Breast epithelium (tissue), 4 donors: ENCODE measurements at regions of chr5 and their contacts with region 1.

Region 1: DNA sequence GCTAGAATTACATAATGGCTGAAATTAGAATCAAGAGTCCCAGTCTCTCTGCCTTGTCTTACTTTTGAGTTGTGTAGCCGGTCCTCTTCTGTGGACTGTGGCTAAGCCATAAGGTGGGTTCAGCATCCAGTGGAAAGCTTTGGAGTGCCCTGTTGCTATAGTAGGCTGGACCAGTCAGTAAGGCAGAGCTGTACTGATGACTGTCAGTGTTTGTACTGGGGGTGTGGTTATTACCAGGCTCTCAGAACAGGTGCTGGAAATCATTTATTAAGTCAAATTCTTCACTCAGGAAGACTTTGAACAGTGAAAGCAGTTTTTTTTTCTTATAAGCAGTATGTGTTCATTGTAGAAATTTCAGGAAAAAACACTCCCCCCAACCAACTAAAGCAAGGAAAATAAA is 129.4 kb downstream of the ZSWIM6 start:
- DNase-seq: no peak
- H3K4me3 ChIP-seq: no peak overlapping the region
- H3K27ac ChIP-seq: no peak overlapping the region
- H3K4me1 ChIP-seq: no peaks in the 10 kb centered on the region
- H3K27me3 ChIP-seq: no peaks in the 10 kb centered on the region
- CTCF ChIP-seq: no peak
- POLR2A ChIP-seq: no peak

Region 2: DNA sequence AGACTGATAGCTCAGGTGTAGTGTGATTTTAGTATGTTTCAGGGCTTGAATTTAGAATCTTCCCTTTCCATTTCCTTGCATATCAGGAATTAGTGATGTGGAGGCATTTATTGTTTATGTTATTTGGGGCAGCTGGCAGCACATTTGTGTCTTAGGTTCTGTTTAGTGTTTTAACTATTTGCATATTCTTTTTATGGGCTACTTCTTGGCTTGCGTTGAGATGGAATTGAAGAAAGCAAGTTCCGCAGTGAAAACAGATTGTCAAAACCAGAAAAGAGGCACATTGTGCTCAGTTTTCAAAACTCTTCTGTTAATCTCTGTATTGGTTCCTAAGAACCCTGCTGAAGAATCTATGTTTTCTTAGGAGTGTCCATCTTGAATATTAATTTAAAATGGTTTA is 49.1 kb before region 1 on chr5:
- intact Hi-C with region 1: loop called (anchors 2 kb)
- DNase-seq: no peak
- H3K4me3 ChIP-seq: no peak overlapping the region
- H3K27ac ChIP-seq: no peak overlapping the region
- H3K4me1 ChIP-seq: no peaks in the 10 kb centered on the region
- H3K27me3 ChIP-seq: no peaks in the 10 kb centered on the region
- CTCF ChIP-seq: no peak
- POLR2A ChIP-seq: no peak

Region 3: DNA sequence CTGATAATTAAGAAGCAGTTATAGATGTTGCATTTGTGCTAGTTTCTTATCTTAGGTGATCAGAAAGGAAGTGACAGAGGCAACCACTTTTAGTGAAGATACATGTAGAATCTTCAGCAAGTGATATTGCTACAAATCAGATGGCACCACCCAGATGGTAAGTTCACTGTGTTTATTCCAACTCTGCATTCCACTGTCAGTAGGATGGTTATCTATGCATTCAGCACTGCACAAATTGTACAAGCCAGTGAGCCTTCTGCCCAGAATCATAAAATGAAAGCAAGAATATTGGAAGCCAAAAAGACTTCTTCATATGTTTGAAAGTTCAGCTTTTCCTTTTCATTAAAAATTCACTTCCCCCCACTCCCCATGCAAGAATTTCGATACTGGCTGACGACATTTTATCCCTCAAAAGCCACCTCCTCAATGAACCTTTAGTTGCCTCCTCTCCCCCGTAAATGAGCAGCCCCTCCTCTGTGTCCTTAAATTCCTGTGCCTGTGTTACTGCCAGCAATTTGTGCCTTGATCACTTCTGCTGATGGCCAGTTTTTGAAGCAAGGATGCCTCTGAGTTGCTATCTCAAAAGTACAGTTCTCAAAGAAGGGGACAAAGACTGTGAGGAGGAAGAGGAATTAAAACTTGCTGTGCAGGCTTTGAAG is 37.8 kb before region 1 on chr5:
- intact Hi-C with region 1: no loop called
- DNase-seq: no peak
- H3K4me3 ChIP-seq: peak overlapping the region in 2 of 3 donors; percentile 11 to 40
- H3K27ac ChIP-seq: peak overlapping the region in 1 of 2 donors; percentile 12
- H3K4me1 ChIP-seq: no peaks in the 10 kb centered on the region
- H3K27me3 ChIP-seq: no peaks in the 10 kb centered on the region
- CTCF ChIP-seq: no peak
- POLR2A ChIP-seq: no peak

Region 4: GRCh38 chr5:62043289-62044280 is 582.2 kb after region 1 on chr5:
- intact Hi-C with region 1: loop called (anchors 5 kb)
- DNase-seq: no peak
- H3K4me3 ChIP-seq: no peak overlapping the region
- H3K27ac ChIP-seq: no peak overlapping the region
- H3K4me1 ChIP-seq: no peaks in the 10 kb centered on the region
- H3K27me3 ChIP-seq: no peaks in the 10 kb centered on the region
- CTCF ChIP-seq: no peak
- POLR2A ChIP-seq: no peak

Region 5: DNA sequence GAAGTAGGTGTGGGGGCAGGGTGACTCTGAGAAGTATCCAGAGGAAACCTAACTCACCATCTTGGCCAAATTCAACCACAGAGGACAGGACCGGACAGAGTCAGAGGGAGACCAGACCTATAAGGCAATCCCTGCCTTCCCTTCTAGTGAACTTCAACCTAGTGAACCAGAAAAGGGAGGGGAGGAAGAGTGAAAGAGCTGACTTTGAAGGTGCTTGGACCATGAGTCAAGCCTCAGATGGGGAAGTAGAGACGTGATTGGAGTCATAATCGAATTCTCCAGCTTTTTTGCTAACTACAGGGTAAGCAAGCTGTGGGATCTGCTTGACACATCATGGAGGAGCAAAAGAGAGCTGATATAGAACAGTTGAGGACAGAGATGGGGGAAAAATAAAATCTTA is 825.8 kb after region 1 on chr5:
- intact Hi-C with region 1: no loop called
- DNase-seq: no peak
- H3K4me3 ChIP-seq: no peak overlapping the region
- H3K27ac ChIP-seq: no peak overlapping the region
- H3K4me1 ChIP-seq: no peaks in the 10 kb centered on the region
- H3K27me3 ChIP-seq: no peaks in the 10 kb centered on the region
- CTCF ChIP-seq: no peak
- POLR2A ChIP-seq: no peak